ENCODE measurements at regions of chr12 and their contacts with region 1.

Region 1: DNA sequence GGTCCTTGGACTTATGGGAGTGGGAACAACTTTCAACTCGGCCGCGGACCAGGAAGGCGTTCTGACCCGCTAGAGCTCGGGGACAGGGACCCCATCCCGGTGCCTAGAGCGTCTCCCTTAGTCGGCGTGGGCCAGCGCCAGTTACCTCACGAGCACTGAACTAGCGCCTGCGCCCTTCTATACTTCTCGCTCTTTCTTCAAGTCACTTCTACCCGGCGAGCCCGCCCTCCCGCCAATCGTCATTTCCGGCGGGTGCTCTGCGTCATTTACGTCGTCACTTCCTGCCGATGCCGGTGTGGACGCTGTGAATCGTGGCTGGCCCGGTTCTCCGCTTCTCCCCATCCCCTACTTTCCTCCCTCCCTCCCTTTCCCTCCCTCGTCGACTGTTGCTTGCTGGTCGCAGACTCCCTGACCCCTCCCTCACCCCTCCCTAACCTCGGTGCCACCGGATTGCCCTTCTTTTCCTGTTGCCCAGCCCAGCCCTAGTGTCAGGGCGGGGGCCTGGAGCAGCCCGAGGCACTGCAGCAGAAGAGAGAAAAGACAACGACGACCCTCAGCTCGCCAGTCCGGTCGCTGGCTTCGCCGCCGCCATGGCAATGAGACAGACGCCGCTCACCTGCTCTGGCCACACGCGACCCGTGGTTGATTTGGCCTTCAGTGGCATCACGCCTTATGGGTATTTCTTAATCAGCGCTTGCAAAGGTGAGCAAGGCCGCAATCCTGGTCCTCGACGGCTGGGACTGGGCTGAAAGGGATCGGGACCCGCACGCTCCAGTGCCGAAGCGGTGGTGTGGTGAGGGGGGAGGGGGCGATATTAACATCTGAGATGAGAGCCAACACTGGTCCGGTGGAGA is at the start of gene STRAP:
- DNase-seq: peak; percentile 92 to 98 (median 96)
- ATAC-seq: peak; percentile 94
- H3K4me3 ChIP-seq: peak within 1 kb of the TSS; percentile 85 to 95
- H3K4me3 Mint-ChIP-seq: peak within 1 kb of the TSS; percentile 99
- H3K27ac ChIP-seq: peak within 1 kb of the TSS; percentile 97 to 99
- H3K27ac Mint-ChIP-seq: peak within 1 kb of the TSS; percentile 100
- H3K4me1 ChIP-seq: peaks cover 30% of the 10 kb centered on the region
- H3K4me1 Mint-ChIP-seq: peaks cover 55% of the 10 kb centered on the region
- H3K27me3 ChIP-seq: no peaks in the 10 kb centered on the region
- H3K27me3 Mint-ChIP-seq: no peaks in the 10 kb centered on the region
- CTCF ChIP-seq: no peak
- total RNA-seq, gene STRAP: 180 to 181 TPM

Region 2: DNA sequence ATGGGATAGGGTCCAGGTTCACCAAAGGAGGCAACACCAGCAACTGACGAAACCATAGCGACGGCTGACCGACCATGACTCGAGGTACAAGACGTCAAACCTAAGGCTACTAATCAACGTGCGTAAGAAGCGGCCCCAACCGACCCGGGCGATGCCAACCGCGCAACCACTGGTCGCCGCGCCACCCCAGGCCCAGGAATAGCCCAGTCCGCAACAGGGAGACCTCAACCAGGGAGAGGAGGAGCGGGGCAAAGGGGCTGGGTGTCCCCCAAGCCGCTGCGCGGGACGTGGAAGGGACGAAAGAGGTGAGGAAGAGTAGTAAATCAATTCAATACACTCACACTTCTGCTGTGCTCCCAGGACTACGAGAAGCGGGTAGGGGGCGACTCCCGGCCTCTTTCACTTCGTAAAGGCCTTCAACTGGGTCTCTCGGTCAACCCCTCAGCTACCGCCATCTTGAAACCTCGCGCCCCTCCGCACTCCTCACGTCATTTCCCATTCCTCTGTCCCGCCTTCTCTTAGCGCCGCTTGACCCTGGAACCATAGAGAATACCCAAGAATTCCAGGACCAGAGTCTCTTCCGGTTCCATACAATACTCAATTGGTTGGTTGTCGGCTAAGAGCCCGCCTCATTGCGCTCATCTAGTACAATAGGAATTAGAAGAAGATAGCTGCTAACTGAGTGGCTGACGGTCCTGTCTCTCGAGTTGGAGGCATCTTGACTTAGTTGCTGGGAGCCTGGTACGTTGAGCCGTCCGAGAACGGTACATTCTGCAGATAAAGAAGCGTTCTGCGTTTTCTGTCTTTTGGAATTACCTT is 1079.1 kb before region 1 on chr12 and contains the starts of genes C12orf60 and WBP11:
- CTCF ChIA-PET with region 1: no interaction called
- POLR2A ChIA-PET with region 1: no interaction called
- intact Hi-C with region 1: loop called (anchors 5 kb)
- DNase-seq: peak; percentile 76 to 98 (median 87)
- ATAC-seq: peak; percentile 94
- H3K4me3 ChIP-seq: peak within 1 kb of the TSS; percentile 86 to 95
- H3K4me3 Mint-ChIP-seq: no peak within 1 kb of the TSS
- H3K27ac ChIP-seq: peak within 1 kb of the TSS; percentile 91 to 98
- H3K27ac Mint-ChIP-seq: no peak within 1 kb of the TSS
- H3K4me1 ChIP-seq: peaks cover 28% of the 10 kb centered on the region
- H3K4me1 Mint-ChIP-seq: peaks cover 12% of the 10 kb centered on the region
- H3K27me3 ChIP-seq: no peaks in the 10 kb centered on the region
- H3K27me3 Mint-ChIP-seq: no peaks in the 10 kb centered on the region
- CTCF ChIP-seq: no peak
- total RNA-seq, gene C12orf60: 0.14 TPM in 1 of 2 experiments, not detected in the other
- total RNA-seq, gene WBP11: 171 to 184 TPM

Region 3: GRCh38 chr12:14948672-14949071 is 933.7 kb before region 1 on chr12:
- CTCF ChIA-PET with region 1: no interaction called
- POLR2A ChIA-PET with region 1: no interaction called
- intact Hi-C with region 1: loop called in 1 of 2 experiments (anchors 10 kb)
- DNase-seq: peak in 7 of 9 experiments; percentile 38 to 91 (median 65)
- ATAC-seq: peak; percentile 86
- H3K4me3 ChIP-seq: peak overlapping the region; percentile 27 to 48
- H3K4me3 Mint-ChIP-seq: peak overlapping the region; percentile 78
- H3K27ac ChIP-seq: peak overlapping the region; percentile 36 to 96
- H3K27ac Mint-ChIP-seq: peak overlapping the region; percentile 94
- H3K4me1 ChIP-seq: peaks cover 91% of the 10 kb centered on the region
- H3K4me1 Mint-ChIP-seq: peaks cover 93% of the 10 kb centered on the region
- H3K27me3 ChIP-seq: no peaks in the 10 kb centered on the region
- H3K27me3 Mint-ChIP-seq: no peaks in the 10 kb centered on the region
- CTCF ChIP-seq: no peak

Region 4: GRCh38 chr12:15532364-15532977 is 349.9 kb before region 1 on chr12:
- CTCF ChIA-PET with region 1: interaction called, 8 read pairs
- POLR2A ChIA-PET with region 1: no interaction called
- intact Hi-C with region 1: loop called in 1 of 2 experiments (anchors 10 kb)
- DNase-seq: peak; percentile 15 to 72 (median 37)
- ATAC-seq: peak; percentile 55
- H3K4me3 ChIP-seq: no peak overlapping the region
- H3K4me3 Mint-ChIP-seq: no peak overlapping the region
- H3K27ac ChIP-seq: no peak overlapping the region
- H3K27ac Mint-ChIP-seq: no peak overlapping the region
- H3K4me1 ChIP-seq: peaks cover 25% of the 10 kb centered on the region
- H3K4me1 Mint-ChIP-seq: peaks cover 18% of the 10 kb centered on the region
- H3K27me3 ChIP-seq: no peaks in the 10 kb centered on the region
- H3K27me3 Mint-ChIP-seq: no peaks in the 10 kb centered on the region
- CTCF ChIP-seq: peak; percentile 70

Region 5: GRCh38 chr12:15789220-15790171 is 92.8 kb before region 1 on chr12 and contains the start of gene EPS8:
- CTCF ChIA-PET with region 1: no interaction called
- POLR2A ChIA-PET with region 1: no interaction called
- intact Hi-C with region 1: loop called (anchors 1 to 5 kb)
- DNase-seq: peak; percentile 76 to 93 (median 87)
- ATAC-seq: peak; percentile 88
- H3K4me3 ChIP-seq: peak within 1 kb of the TSS; percentile 68 to 87
- H3K4me3 Mint-ChIP-seq: peak within 1 kb of the TSS; percentile 97
- H3K27ac ChIP-seq: peak within 1 kb of the TSS in 1 of 2 experiments; percentile 41
- H3K27ac Mint-ChIP-seq: peak within 1 kb of the TSS; percentile 42
- H3K4me1 ChIP-seq: peaks cover 8% of the 10 kb centered on the region
- H3K4me1 Mint-ChIP-seq: peaks cover 14% of the 10 kb centered on the region
- H3K27me3 ChIP-seq: peaks cover 8 to 15% of the 10 kb centered on the region in 2 experiments
- H3K27me3 Mint-ChIP-seq: peaks cover 39% of the 10 kb centered on the region
- CTCF ChIP-seq: no peak
- total RNA-seq, gene EPS8: 1.7 to 2.1 TPM

Region 6: DNA sequence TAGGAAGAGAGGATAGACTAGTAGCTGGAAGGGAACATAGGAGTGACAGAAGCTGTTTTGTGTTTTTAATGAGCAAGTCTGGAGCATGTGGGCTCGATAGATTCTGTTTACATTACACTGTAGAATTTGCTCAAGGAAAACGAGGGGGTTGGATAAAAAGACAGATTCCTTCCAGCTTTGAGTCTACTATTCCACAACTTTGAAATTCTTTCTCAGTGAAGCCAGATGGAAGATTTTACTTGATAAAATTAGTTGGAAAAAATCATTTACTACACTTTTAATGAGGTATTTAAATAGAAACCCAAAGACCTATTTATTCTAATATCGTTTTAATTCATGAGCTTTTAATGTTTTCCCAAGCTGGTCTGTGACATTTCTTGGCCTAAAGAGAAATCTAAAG is 73.7 kb before region 1 on chr12:
- CTCF ChIA-PET with region 1: no interaction called
- POLR2A ChIA-PET with region 1: no interaction called
- intact Hi-C with region 1: no loop called
- DNase-seq: no peak
- ATAC-seq: no peak
- H3K4me3 ChIP-seq: no peak overlapping the region
- H3K4me3 Mint-ChIP-seq: no peak overlapping the region
- H3K27ac ChIP-seq: no peak overlapping the region
- H3K27ac Mint-ChIP-seq: no peak overlapping the region
- H3K4me1 ChIP-seq: no peaks in the 10 kb centered on the region
- H3K4me1 Mint-ChIP-seq: no peaks in the 10 kb centered on the region
- H3K27me3 ChIP-seq: no peaks in the 10 kb centered on the region
- H3K27me3 Mint-ChIP-seq: peaks cover 10% of the 10 kb centered on the region
- CTCF ChIP-seq: no peak

Region 7: DNA sequence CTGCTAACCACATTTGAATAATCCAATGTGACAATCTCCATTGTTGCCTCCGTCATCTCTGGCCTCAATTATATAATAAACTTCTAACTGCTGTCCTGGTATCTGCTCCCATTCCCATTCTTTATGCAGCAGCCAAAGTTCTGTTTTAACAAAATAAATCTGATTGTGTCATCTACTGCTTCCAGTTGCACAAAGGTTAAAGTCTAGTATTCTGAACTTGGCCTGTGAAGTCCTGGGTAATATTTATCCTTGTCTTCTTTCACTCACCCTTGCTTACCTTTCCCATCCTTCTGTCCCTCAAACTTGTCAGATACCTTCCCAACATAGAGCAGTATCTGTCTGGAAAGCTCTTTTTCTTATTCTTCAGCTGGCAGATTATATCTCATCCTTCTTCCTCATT is 19.5 kb before region 1 on chr12:
- CTCF ChIA-PET with region 1: no interaction called
- POLR2A ChIA-PET with region 1: no interaction called
- intact Hi-C with region 1: no loop called
- DNase-seq: no peak
- ATAC-seq: no peak
- H3K4me3 ChIP-seq: no peak overlapping the region
- H3K4me3 Mint-ChIP-seq: no peak overlapping the region
- H3K27ac ChIP-seq: no peak overlapping the region
- H3K27ac Mint-ChIP-seq: no peak overlapping the region
- H3K4me1 ChIP-seq: no peaks in the 10 kb centered on the region
- H3K4me1 Mint-ChIP-seq: peaks cover 3% of the 10 kb centered on the region
- H3K27me3 ChIP-seq: peaks cover 0 to 4% of the 10 kb centered on the region in 2 experiments
- H3K27me3 Mint-ChIP-seq: peaks cover 33% of the 10 kb centered on the region
- CTCF ChIP-seq: no peak

Region 8: GRCh38 chr12:15899282-15899870 is 17.0 kb after region 1 on chr12:
- CTCF ChIA-PET with region 1: interaction called, 5 read pairs
- POLR2A ChIA-PET with region 1: no interaction called
- intact Hi-C with region 1: loop called in 1 of 2 experiments (anchors 1 kb)
- DNase-seq: peak in 2 of 9 experiments; percentile 46 to 62
- ATAC-seq: peak; percentile 44
- H3K4me3 ChIP-seq: no peak overlapping the region
- H3K4me3 Mint-ChIP-seq: no peak overlapping the region
- H3K27ac ChIP-seq: no peak overlapping the region
- H3K27ac Mint-ChIP-seq: peak overlapping the region; percentile 74
- H3K4me1 ChIP-seq: no peaks in the 10 kb centered on the region
- H3K4me1 Mint-ChIP-seq: peaks cover 6% of the 10 kb centered on the region
- H3K27me3 ChIP-seq: no peaks in the 10 kb centered on the region
- H3K27me3 Mint-ChIP-seq: no peaks in the 10 kb centered on the region
- CTCF ChIP-seq: peak; percentile 94

Region 9: DNA sequence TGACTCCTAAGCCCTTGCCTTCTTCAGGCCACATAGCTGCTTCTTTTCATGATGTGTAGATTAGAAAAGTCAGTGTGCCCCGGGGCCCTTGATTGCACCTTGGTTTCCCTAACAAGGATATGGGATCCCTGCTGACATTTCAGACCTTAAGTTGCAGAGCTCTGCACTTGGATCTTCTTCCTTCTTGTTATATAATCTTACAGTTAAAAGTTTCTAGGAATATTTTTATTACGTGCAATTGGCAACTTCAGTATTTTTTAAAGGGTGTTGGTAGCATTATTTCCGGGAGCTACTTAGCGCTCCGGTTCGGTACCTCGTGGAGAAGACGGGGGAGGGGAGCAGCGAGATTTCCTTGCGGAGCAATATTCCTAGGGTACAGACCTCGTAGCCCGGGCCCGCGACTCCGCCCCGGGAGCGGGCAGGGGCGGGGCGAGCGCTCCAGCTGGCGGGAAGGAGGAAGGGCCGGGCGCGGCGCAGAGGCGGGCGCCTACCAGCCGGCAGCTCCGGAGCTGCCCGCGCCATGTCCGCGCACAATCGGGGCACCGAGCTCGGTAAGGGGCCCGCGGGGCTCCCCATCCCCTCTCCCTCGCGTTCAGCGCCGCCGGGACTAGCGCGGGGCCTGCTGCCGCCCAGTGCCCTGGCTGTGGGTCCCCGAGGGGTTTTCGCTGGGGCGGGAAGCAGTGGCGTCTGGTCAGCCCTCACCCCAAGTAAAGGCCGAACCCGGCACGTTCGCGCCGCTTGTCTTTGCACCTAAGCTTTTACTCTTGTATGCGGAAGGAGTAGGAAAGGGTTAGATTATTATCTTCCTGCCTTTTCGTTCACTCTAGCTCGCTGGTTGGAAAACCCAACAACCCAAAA is 28.7 kb after region 1 on chr12 and contains the start of gene DERA:
- CTCF ChIA-PET with region 1: no interaction called
- POLR2A ChIA-PET with region 1: interaction called, 14 read pairs
- intact Hi-C with region 1: loop called in 1 of 2 experiments (anchors 1 kb)
- DNase-seq: peak; percentile 2 to 77 (median 56)
- ATAC-seq: peak; percentile 89
- H3K4me3 ChIP-seq: peak within 1 kb of the TSS; percentile 57 to 79
- H3K4me3 Mint-ChIP-seq: peak within 1 kb of the TSS; percentile 90
- H3K27ac ChIP-seq: peak within 1 kb of the TSS; percentile 61 to 70
- H3K27ac Mint-ChIP-seq: peak within 1 kb of the TSS; percentile 81
- H3K4me1 ChIP-seq: peaks cover 6% of the 10 kb centered on the region
- H3K4me1 Mint-ChIP-seq: peaks cover 30% of the 10 kb centered on the region
- H3K27me3 ChIP-seq: no peaks in the 10 kb centered on the region
- H3K27me3 Mint-ChIP-seq: no peaks in the 10 kb centered on the region
- CTCF ChIP-seq: no peak
- total RNA-seq, gene DERA: 4.9 to 5.1 TPM

Region 10: GRCh38 chr12:15956413-15957185 is 74.3 kb after region 1 on chr12:
- CTCF ChIA-PET with region 1: no interaction called
- POLR2A ChIA-PET with region 1: no interaction called
- intact Hi-C with region 1: no loop called
- DNase-seq: no peak
- ATAC-seq: no peak
- H3K4me3 ChIP-seq: no peak overlapping the region
- H3K4me3 Mint-ChIP-seq: no peak overlapping the region
- H3K27ac ChIP-seq: no peak overlapping the region
- H3K27ac Mint-ChIP-seq: no peak overlapping the region
- H3K4me1 ChIP-seq: no peaks in the 10 kb centered on the region
- H3K4me1 Mint-ChIP-seq: no peaks in the 10 kb centered on the region
- H3K27me3 ChIP-seq: no peaks in the 10 kb centered on the region
- H3K27me3 Mint-ChIP-seq: no peaks in the 10 kb centered on the region
- CTCF ChIP-seq: no peak